ENCODE measurements at regions of chr1 and their contacts with region 1.

Region 1: DNA sequence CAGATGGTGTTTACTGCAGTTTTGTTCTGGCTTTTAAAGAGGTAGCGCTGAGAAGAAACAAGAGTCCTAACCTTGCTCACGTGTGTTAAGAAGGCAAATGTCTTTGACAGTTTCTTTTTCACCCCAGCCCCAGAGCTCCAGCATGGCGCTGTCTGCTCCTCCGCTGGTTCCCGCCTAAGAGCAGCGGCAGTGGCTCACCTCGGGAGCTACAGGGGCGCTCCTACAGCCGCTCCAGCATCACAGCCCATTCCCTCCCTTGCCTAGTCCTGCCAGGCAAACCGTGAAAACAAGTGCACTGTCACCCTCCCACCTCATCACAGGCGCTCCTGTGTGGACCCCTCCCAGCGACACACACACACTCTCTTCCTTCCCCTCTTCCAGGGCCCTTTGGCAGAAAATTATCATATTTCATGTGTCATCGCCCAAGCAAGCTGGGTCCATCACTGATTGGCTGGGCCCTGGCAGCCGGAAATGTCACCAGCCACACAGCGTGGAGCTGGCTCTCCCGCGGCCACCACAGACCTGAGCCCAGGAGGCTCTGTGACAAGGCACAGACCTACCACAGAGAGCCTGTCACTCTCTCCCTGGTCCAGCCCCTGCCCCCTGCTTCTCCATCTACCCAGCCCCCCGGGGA is 1.2 kb upstream of the HIVEP3 start:
- DNase-seq: peak; percentile 71
- ATAC-seq: peak; percentile 71

Region 2: DNA sequence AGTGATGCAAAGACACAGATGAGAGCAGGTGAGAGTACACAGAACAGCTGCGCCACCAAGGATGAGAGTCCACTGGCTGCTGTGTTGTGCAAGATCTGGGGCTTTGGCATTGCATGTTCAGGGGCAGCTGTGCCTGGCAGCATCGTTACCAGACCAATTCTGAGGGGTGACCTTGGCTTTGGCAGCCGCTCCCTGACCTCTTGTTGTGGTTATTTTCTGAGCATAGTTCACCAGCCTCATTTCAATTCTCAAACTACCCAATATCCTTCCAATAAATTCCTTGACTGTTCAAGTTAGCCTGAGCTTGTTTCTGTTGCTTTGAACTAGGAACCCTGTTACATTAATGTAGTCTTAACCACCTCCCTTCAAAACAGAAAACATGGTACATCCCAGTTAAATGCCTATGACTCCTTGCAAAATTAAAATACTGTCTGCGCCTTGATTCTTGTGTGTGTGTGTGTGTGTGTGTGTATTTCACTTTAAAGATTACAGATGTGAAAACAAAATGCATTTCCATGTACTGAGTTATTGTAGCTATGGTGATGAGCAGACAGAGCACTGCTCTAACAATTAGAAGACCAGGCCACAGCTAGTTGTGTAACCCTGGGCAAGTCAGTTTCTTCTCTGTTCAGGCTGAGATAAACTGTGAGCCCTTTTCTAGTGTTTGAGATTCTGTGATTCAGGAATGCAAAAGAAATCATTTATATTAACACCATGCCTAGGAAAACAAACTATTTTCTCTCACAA is 127.1 kb after region 1 on chr1:
- intact Hi-C with region 1: loop called (anchors 10 kb)
- DNase-seq: peak; percentile 49
- ATAC-seq: peak; percentile 88

Region 3: DNA sequence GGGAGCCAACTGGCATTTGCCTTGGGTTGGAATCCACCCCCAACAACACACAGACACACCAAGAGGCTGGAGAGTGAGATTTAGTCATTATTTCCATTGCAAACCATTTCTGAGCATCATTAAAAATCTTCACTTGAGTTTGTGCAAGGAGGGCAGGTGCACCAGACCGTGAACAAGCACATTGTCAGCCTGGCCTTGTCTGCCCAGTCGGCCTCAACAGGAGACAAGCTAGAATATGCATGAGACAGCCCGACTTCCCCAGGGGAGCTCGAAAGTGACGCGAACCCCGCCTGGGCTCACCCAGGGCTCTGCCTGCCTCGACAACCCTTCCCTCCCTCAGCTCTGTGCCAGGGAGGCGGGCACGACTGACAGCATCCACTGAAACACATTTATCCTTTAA is 217.9 kb after region 1 on chr1:
- intact Hi-C with region 1: no loop called
- DNase-seq: no peak
- ATAC-seq: no peak